Esophagus muscularis mucosa (tissue), 4 donors: ENCODE measurements at regions of chr11 and their contacts with region 1.

Region 1: GRCh38 chr11:86456052-86456939 is 81.6 kb downstream of the CCDC81 start:
- DNase-seq: peak; percentile 96
- H3K4me3 ChIP-seq: no peak overlapping the region
- H3K27ac ChIP-seq: peak overlapping the region in 1 of 4 donors; percentile 4
- H3K4me1 ChIP-seq: peaks cover 23 to 53% (median 42%) of the 10 kb centered on the region in 4 donors
- H3K27me3 ChIP-seq: peaks cover 0 to 4% (median 0%) of the 10 kb centered on the region in 4 donors
- CTCF ChIP-seq: peak; percentile 91
- EP300 ChIP-seq: no peak
- POLR2A ChIP-seq: no peak

Region 2: GRCh38 chr11:86608251-86608799 is 152.0 kb after region 1 on chr11:
- intact Hi-C with region 1: loop called (anchors 5 kb)
- DNase-seq: peak; percentile 92
- H3K4me3 ChIP-seq: peak overlapping the region in 3 of 4 donors; percentile 21 to 33 (median 25)
- H3K27ac ChIP-seq: peak overlapping the region; percentile 1 to 69 (median 30)
- H3K4me1 ChIP-seq: peaks cover 25 to 48% (median 40%) of the 10 kb centered on the region in 4 donors
- H3K27me3 ChIP-seq: no peaks in the 10 kb centered on the region
- CTCF ChIP-seq: peak; percentile 87 to 92 (median 91)
- EP300 ChIP-seq: no peak
- POLR2A ChIP-seq: no peak

Region 3: DNA sequence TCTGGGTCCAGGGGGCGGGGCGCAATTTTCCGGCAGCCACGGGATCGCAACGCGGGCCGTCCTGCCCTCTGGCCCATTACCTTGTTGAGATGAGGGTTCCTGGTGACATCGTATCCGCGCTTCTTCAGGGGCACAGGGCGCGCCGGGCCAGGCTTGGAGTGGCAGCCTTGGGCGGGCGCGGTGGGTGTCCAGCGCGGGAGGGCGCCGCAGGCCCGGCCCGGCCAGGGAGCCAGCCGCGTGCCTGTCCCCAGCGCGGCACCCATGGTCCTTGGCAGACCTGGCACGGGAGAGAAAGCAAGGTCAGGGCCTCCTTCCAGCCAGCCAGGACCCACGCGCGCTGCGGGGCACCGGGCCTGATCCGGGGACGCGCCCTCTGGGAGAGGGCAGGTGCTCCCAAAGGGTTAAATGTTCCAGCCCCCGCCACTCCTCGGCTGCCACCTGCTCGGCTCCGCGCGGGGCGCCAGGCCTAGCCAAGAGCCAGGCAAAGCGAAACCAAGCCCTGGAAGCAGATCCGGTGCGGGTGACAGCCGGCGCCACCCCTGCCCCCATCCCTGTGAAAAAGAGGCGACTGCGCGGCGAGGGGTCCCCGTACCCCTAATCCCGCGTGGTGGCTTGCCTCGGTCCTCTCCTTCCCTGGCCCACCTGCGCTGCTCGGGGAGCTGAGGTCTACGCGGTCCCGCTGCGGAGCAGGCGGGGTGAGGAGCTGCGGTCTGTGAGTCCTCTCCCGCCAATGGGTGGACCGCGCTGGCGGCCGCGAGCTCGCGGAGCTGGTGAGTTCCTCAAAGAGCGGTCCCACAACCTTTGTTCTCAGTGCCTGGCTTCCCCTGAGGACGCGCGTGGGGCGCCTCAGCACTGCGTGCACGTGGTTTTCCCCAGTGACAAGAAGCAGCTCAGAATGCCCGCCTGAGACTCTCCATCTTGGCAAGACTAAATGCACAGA is 215.7 kb after region 1 on chr11 and contains the start of gene ME3:
- intact Hi-C with region 1: loop called (anchors 5 kb)
- DNase-seq: no peak
- H3K4me3 ChIP-seq: peak within 1 kb of the TSS; percentile 65 to 88 (median 74)
- H3K27ac ChIP-seq: peak within 1 kb of the TSS; percentile 89 to 98 (median 94)
- H3K4me1 ChIP-seq: peaks cover 24 to 68% (median 56%) of the 10 kb centered on the region in 4 donors
- H3K27me3 ChIP-seq: no peaks in the 10 kb centered on the region
- CTCF ChIP-seq: no peak
- EP300 ChIP-seq: no peak
- POLR2A ChIP-seq: no peak
- total RNA-seq, gene ME3: 20.4 to 50.1 (median 26.2) TPM

Region 4: GRCh38 chr11:86818466-86819192 is 362.3 kb after region 1 on chr11:
- intact Hi-C with region 1: loop called (anchors 2 kb)
- DNase-seq: no peak
- H3K4me3 ChIP-seq: no peak overlapping the region
- H3K27ac ChIP-seq: no peak overlapping the region
- H3K4me1 ChIP-seq: peaks cover 7 to 50% (median 45%) of the 10 kb centered on the region in 4 donors
- H3K27me3 ChIP-seq: no peaks in the 10 kb centered on the region
- CTCF ChIP-seq: peak; percentile 71 to 86 (median 82)
- EP300 ChIP-seq: no peak
- POLR2A ChIP-seq: no peak